ENCODE measurements at regions of chr1 and their contacts with region 1.

Region 1: GRCh38 chr1:193019442-193020026 is 39.6 kb downstream of the UCHL5 start:
- DNase-seq: peak; percentile 24 to 49 (median 36)
- ATAC-seq: peak; percentile 85
- H3K4me3 ChIP-seq: no peak overlapping the region
- H3K27ac ChIP-seq: no peak overlapping the region
- H3K4me1 ChIP-seq: no peaks in the 10 kb centered on the region
- H3K27me3 ChIP-seq: no peaks in the 10 kb centered on the region
- CTCF ChIP-seq: peak in 1 of 3 experiments; percentile 69; a peak in 2 of 6 replicates
- EP300 ChIP-seq: no peak
- POLR2A ChIP-seq: no peak
- RAD21 ChIP-seq: peak; percentile 77

Region 2: DNA sequence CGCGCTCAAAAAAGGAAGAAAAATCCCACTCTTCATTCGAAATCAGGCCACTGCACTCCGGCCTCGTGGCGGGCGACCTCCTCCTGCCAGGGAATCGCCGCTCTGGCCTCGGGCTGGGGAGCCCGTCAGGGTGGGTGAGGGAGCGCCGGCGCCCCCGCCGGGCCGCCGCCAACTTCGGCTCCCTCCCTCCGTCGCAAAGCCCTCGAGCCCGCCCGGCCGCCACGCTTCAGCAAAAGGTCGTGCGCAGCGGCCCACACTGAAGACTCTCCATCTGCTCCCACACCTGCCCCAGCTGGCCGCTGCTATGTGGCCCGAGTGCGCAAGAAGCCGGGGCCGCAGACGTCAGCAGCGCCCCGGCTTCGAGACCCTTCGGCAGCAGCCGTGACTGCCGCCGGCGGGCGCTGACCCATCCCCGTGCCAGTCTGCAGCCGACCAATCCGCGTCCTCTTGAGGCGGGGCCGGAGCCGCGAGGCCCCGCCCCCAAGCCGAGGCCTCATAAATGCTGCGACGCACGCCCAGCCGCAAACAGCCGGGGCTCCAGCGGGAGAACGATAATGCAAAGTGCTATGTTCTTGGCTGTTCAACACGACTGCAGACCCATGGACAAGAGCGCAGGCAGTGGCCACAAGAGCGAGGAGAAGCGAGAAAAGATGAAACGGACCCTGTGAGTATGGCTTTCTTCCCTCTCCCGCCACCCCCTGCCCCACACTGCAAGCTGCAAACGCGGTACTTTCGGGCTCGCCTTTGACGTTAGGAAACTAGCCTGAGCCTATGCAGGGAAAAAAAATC is 210.8 kb before region 1 on chr1 and contains the start of gene RGS2:
- CTCF ChIA-PET with region 1: interaction called, 25 read pairs
- POLR2A ChIA-PET with region 1: interaction called, 4 read pairs
- in situ Hi-C with region 1: loop called (anchors 10 kb)
- intact Hi-C with region 1: loop called (anchors 1 kb)
- DNase-seq: peak; percentile 93 to 98 (median 98)
- ATAC-seq: peak; percentile 99
- H3K4me3 ChIP-seq: peak within 1 kb of the TSS; percentile 63
- H3K27ac ChIP-seq: peak within 1 kb of the TSS; percentile 24; the same call in 1 of the 3 replicates
- H3K4me1 ChIP-seq: peaks cover 6 to 14% of the 10 kb centered on the region in 2 experiments; a peak in 4 of 5 replicates
- H3K27me3 ChIP-seq: no peaks in the 10 kb centered on the region
- CTCF ChIP-seq: peak in 1 of 3 experiments; percentile 1; a peak in 1 of 6 replicates
- EP300 ChIP-seq: no peak
- POLR2A ChIP-seq: peak; percentile 96
- RAD21 ChIP-seq: no peak; a peak in 1 of 4 replicates
- polyA plus RNA-seq, gene RGS2: 4.7 to 5.4 TPM

Region 3: GRCh38 chr1:193083365-193084088 is 64.0 kb after region 1 on chr1:
- CTCF ChIA-PET with region 1: no interaction called
- POLR2A ChIA-PET with region 1: no interaction called
- in situ Hi-C with region 1: no loop called
- intact Hi-C with region 1: no loop called
- DNase-seq: no peak
- ATAC-seq: no peak; the same call in 2 of the 3 replicates
- H3K4me3 ChIP-seq: no peak overlapping the region
- H3K27ac ChIP-seq: no peak overlapping the region
- H3K4me1 ChIP-seq: no peaks in the 10 kb centered on the region
- H3K27me3 ChIP-seq: no peaks in the 10 kb centered on the region
- CTCF ChIP-seq: no peak
- EP300 ChIP-seq: no peak
- POLR2A ChIP-seq: no peak
- RAD21 ChIP-seq: no peak

Region 4: GRCh38 chr1:193368302-193368701 is 348.8 kb after region 1 on chr1:
- CTCF ChIA-PET with region 1: no interaction called
- POLR2A ChIA-PET with region 1: no interaction called
- in situ Hi-C with region 1: no loop called
- intact Hi-C with region 1: no loop called
- DNase-seq: no peak
- ATAC-seq: no peak
- H3K4me3 ChIP-seq: no peak overlapping the region
- H3K27ac ChIP-seq: no peak overlapping the region
- H3K4me1 ChIP-seq: no peaks in the 10 kb centered on the region
- H3K27me3 ChIP-seq: no peaks in the 10 kb centered on the region
- CTCF ChIP-seq: no peak
- EP300 ChIP-seq: no peak
- POLR2A ChIP-seq: no peak
- RAD21 ChIP-seq: no peak